Activated T-helper 1 cell treated with anti-CD3 and anti-CD28 coated beads, Interleukin-12 subunit alpha, Interleukin-12 subunit beta, Interleukin-2, Interleukin-4 antibody, amounts not matched to agents 30 ng/mL and 10 ng/mL and 1 ng/mL, durations not matched to agents 14 hours and 24 hours and 36 hours (primary cell): ENCODE measurements at regions of chr13 and their contacts with region 1.

Region 1: GRCh38 chr13:27923794-27924528 is 4.2 kb downstream of the PDX1 start:
- DNase-seq: no peak
- H3K4me3 Mint-ChIP-seq: no peak overlapping the region
- H3K27ac Mint-ChIP-seq: peak overlapping the region; percentile 66
- H3K4me1 Mint-ChIP-seq: peaks cover 7% of the 10 kb centered on the region
- H3K27me3 Mint-ChIP-seq: peaks cover 78% of the 10 kb centered on the region

Region 2: GRCh38 chr13:27792393-27793218 is 131.4 kb before region 1 on chr13 and contains the start of gene GSX1:
- intact Hi-C with region 1: loop called (anchors 2 kb)
- DNase-seq: peak; percentile 16
- H3K4me3 Mint-ChIP-seq: peak within 1 kb of the TSS; percentile 71
- H3K27ac Mint-ChIP-seq: peak within 1 kb of the TSS; percentile 83
- H3K4me1 Mint-ChIP-seq: peaks cover 23% of the 10 kb centered on the region
- H3K27me3 Mint-ChIP-seq: peaks cover 76% of the 10 kb centered on the region
- total RNA-seq, gene GSX1: not detected in 2 replicates

Region 3: DNA sequence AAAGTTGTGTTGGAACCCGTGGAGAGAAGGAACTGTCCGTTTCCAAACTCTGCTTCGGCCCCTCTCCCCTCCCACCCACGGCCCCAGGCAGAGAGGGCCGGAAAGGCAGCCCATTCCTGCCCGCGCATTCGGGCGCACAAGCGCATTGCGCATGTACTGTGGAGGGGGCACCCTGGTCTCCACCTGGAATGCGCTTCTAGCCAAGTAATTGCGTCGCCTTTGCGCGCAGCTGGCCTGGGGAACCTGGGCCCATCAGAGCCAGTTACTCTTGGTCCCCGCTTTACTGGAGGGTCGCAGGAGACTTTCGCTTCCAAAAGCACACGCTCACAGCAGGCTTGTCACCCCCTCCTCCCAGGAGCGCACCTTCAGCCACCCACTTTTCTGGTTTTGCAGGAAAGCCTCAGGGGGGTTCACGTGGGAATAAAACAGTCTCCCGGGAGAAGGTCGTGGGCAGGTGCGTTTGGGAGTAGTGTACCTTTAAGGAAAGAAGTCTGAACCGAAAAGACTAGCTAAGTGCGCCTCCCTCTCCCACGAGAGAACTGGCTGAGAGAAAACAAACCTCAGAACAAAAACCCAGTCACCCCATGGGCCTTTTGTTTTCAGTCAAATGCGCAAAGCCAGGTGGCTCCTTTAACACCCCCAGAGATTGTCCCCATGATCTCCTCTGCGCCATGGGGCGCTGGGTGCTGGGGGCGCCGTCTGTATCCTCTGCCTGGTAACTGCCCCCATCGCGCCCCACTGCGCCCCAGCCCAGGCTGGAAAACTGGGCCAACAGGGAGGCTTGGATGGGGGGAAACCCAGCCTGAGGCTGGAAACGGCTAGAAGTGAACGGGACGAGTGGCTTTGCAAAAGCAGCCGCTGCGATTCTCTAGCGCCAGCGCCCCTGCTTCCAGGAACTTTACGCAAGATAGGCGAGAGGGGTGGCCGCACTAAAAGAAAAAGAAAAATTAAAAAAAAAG is 103.2 kb before region 1 on chr13:
- intact Hi-C with region 1: loop called (anchors 2 kb)
- DNase-seq: no peak
- H3K4me3 Mint-ChIP-seq: no peak overlapping the region
- H3K27ac Mint-ChIP-seq: no peak overlapping the region
- H3K4me1 Mint-ChIP-seq: no peaks in the 10 kb centered on the region
- H3K27me3 Mint-ChIP-seq: peaks cover 58% of the 10 kb centered on the region

Region 4: DNA sequence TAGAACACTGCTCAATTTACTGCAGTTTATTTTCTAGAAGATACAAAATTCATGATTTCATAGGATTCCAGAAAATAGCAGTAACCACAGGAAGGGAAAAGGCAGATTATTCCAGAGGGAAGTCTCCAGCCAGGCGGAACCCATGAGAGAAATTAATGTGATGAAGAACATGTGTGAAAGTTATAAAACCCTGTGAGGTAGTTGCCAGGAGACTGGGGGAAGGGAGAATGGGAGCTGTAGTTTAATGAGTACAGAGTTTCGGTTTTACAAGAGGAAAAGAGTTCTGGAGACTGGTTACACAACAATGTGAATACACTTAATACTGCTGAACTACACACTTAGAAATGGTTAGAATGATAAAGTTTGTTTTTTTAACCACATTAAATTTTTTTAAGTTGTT is 18.3 kb before region 1 on chr13:
- intact Hi-C with region 1: no loop called
- DNase-seq: no peak
- H3K4me3 Mint-ChIP-seq: no peak overlapping the region
- H3K27ac Mint-ChIP-seq: no peak overlapping the region
- H3K4me1 Mint-ChIP-seq: no peaks in the 10 kb centered on the region
- H3K27me3 Mint-ChIP-seq: peaks cover 13% of the 10 kb centered on the region

Region 5: GRCh38 chr13:27968316-27969081 is 44.5 kb after region 1 on chr13:
- intact Hi-C with region 1: loop called (anchors 2 kb)
- DNase-seq: no peak
- H3K4me3 Mint-ChIP-seq: no peak overlapping the region
- H3K27ac Mint-ChIP-seq: no peak overlapping the region
- H3K4me1 Mint-ChIP-seq: no peaks in the 10 kb centered on the region
- H3K27me3 Mint-ChIP-seq: peaks cover 72% of the 10 kb centered on the region